Activated CD4-positive, alpha-beta T cell treated with anti-CD3 and anti-CD28 coated beads for 36 hours (primary cell): ENCODE measurements at regions of chr19 and their contacts with region 1.

Region 1: GRCh38 chr19:41310033-41310758 is at the start of gene CCDC97:
- DNase-seq: peak; percentile 92
- ATAC-seq: peak; percentile 66
- H3K4me3 Mint-ChIP-seq: peak within 1 kb of the TSS; percentile 91
- H3K27ac Mint-ChIP-seq: peak within 1 kb of the TSS; percentile 97
- H3K4me1 Mint-ChIP-seq: peaks cover 63% of the 10 kb centered on the region
- H3K27me3 Mint-ChIP-seq: no peaks in the 10 kb centered on the region
- total RNA-seq, gene CCDC97: 21.2 to 21.4 TPM

Region 2: GRCh38 chr19:40798223-40798996 is 511.8 kb before region 1 on chr19:
- CTCF ChIA-PET with region 1: no interaction called
- POLR2A ChIA-PET with region 1: no interaction called
- intact Hi-C with region 1: loop called in 1 of 2 experiments (anchors 2 kb)
- DNase-seq: peak; percentile 100
- ATAC-seq: peak; percentile 82
- H3K4me3 Mint-ChIP-seq: peak overlapping the region; percentile 91
- H3K27ac Mint-ChIP-seq: peak overlapping the region; percentile 97
- H3K4me1 Mint-ChIP-seq: peaks cover 49% of the 10 kb centered on the region
- H3K27me3 Mint-ChIP-seq: no peaks in the 10 kb centered on the region

Region 3: GRCh38 chr19:41123716-41124294 is 186.4 kb before region 1 on chr19:
- CTCF ChIA-PET with region 1: interaction called, 5 read pairs
- POLR2A ChIA-PET with region 1: no interaction called
- intact Hi-C with region 1: loop called (anchors 2 kb)
- DNase-seq: no peak
- ATAC-seq: no peak
- H3K4me3 Mint-ChIP-seq: no peak overlapping the region
- H3K27ac Mint-ChIP-seq: no peak overlapping the region
- H3K4me1 Mint-ChIP-seq: peaks cover 25% of the 10 kb centered on the region
- H3K27me3 Mint-ChIP-seq: no peaks in the 10 kb centered on the region

Region 4: GRCh38 chr19:41206926-41207750 is 103.1 kb before region 1 on chr19:
- CTCF ChIA-PET with region 1: interaction called, 20 read pairs
- POLR2A ChIA-PET with region 1: interaction called, 3 read pairs
- intact Hi-C with region 1: loop called (anchors 1 kb)
- DNase-seq: no peak
- ATAC-seq: no peak
- H3K4me3 Mint-ChIP-seq: no peak overlapping the region
- H3K27ac Mint-ChIP-seq: no peak overlapping the region
- H3K4me1 Mint-ChIP-seq: peaks cover 2% of the 10 kb centered on the region
- H3K27me3 Mint-ChIP-seq: no peaks in the 10 kb centered on the region

Region 5: DNA sequence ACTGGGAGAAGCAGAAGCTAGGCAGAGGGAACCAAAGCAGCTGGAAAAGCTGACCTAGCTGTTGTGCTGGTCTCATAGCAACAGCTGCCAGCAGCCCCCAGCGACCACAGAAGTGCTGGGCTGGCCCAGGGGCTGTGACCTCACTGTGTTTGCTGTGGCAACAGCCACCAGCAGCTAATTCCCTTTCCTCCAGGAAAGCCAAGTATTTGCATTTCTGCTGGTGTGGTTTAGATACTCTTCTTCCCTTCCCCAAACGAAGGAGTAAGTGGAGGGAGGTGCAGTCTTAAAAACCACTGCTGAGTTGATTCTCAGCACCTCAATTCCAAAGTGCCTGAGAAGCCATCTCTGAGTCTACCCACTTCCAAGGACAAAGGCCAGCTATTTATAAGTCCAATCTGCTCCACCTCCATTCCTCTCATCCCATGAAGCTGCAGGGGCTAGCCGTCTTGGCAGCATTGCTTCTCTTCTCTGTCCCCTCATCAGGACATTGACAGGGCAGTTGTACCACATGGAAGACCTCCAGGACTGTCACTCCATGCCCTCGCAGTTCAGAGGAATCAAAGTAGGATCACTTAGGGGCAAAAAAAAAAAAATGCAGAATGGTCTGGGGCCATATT is 11.7 kb before region 1 on chr19:
- CTCF ChIA-PET with region 1: interaction called, 36 read pairs
- POLR2A ChIA-PET with region 1: interaction called, 7 read pairs
- intact Hi-C with region 1: no loop called
- DNase-seq: no peak
- ATAC-seq: no peak
- H3K4me3 Mint-ChIP-seq: no peak overlapping the region
- H3K27ac Mint-ChIP-seq: peak overlapping the region; percentile 68
- H3K4me1 Mint-ChIP-seq: peaks cover 91% of the 10 kb centered on the region
- H3K27me3 Mint-ChIP-seq: no peaks in the 10 kb centered on the region

Region 6: DNA sequence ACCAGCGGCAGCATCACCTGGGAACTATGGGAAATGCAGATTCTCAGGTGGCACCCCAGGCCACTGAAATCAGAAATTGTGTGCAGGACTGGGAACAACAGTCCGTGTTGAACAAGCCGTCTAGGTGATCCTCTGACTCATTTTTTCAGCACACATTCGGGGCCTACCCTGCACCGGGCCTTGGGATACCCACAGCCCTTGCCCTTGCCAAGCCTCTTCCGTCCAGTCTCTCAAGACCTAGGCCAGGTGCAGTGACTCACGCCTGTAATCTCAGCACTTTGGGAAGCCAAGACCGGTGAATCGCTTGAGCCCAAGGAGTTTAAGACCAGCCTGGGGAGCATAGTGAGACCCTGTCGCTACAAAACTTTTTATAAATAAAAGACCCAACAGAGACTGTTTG is 25.3 kb after region 1 on chr19:
- CTCF ChIA-PET with region 1: no interaction called
- POLR2A ChIA-PET with region 1: no interaction called
- intact Hi-C with region 1: no loop called
- DNase-seq: no peak
- ATAC-seq: no peak
- H3K4me3 Mint-ChIP-seq: no peak overlapping the region
- H3K27ac Mint-ChIP-seq: no peak overlapping the region
- H3K4me1 Mint-ChIP-seq: peaks cover 20% of the 10 kb centered on the region
- H3K27me3 Mint-ChIP-seq: no peaks in the 10 kb centered on the region

Region 7: GRCh38 chr19:41353466-41354342 is 43.5 kb after region 1 on chr19 and contains the start of gene TGFB1:
- CTCF ChIA-PET with region 1: interaction called, 12 read pairs
- POLR2A ChIA-PET with region 1: no interaction called
- intact Hi-C with region 1: loop called (anchors 1 kb)
- DNase-seq: peak; percentile 96
- ATAC-seq: peak; percentile 45
- H3K4me3 Mint-ChIP-seq: peak within 1 kb of the TSS; percentile 96
- H3K27ac Mint-ChIP-seq: peak within 1 kb of the TSS; percentile 97
- H3K4me1 Mint-ChIP-seq: peaks cover 58% of the 10 kb centered on the region
- H3K27me3 Mint-ChIP-seq: no peaks in the 10 kb centered on the region
- total RNA-seq, gene TGFB1: 86.2 to 99.0 TPM

Region 8: DNA sequence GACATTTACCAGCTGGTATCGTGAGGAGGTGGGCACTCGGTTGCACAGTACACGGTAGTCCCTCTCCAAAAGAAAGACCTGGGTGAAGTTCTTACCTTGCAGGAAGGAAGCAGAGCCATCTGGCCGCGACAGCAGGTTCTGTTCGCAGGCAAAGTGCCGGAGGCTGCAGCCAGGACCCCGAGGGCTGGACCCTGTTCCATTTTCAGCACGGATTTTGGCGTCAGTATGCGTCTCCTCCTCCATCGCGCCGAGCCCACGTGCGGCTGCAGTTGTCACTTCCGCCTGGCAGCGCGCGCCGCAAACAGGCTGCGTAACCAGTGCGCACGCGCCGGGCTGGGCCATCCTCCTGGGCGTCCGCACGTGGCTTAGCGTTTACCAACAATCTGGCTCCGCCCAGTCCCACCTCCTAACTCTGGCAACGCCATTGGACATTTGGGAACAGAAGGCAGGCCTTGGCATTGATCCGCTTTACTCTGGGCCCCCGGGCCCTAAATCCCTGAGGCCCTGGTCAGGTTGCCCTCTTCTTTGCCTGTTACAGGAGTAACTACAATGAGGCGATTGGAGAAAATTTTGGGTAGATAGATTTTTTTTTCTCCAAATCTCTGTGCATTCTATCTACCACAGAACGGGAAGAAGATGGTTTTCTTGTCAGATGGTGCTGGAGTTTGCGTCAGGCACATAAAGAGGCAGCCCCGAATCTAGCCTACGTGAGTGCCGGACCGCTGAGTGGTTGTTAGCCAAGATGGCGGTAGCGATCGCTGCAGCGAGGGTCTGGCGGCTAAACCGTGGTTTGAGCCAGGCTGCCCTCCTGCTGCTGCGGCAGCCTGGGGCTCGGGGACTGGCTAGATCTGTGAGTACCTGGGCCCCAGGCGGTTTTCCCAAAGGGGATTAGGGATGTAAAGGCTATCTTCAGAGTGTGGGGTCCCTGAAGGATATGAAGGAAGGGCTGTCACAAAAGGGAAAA is 87.2 kb after region 1 on chr19 and contains the starts of genes BCKDHA and EXOSC5:
- CTCF ChIA-PET with region 1: no interaction called
- POLR2A ChIA-PET with region 1: no interaction called
- intact Hi-C with region 1: loop called in 1 of 2 experiments (anchors 1 kb)
- DNase-seq: peak; percentile 99
- ATAC-seq: peak; percentile 100
- H3K4me3 Mint-ChIP-seq: peak within 1 kb of the TSS; percentile 97
- H3K27ac Mint-ChIP-seq: peak within 1 kb of the TSS; percentile 97
- H3K4me1 Mint-ChIP-seq: peaks cover 31% of the 10 kb centered on the region
- H3K27me3 Mint-ChIP-seq: no peaks in the 10 kb centered on the region
- total RNA-seq, gene BCKDHA: 14.5 to 25.4 TPM
- total RNA-seq, gene EXOSC5: 32.7 to 47.8 TPM